Activated CD8-positive, alpha-beta memory T cell treated with anti-CD3 and anti-CD28 coated beads, Interleukin-2, amount 10 ng/mL, durations not matched to agents 7 days and 5 days (primary cell): ENCODE measurements at regions of chr1 and their contacts with region 1.

Region 1: GRCh38 chr1:145927063-145927886 is at the start of gene RBM8A:
- DNase-seq: peak; percentile 99
- ATAC-seq: peak; percentile 97
- H3K4me3 Mint-ChIP-seq: no peak within 1 kb of the TSS
- H3K27ac Mint-ChIP-seq: no peak within 1 kb of the TSS
- H3K4me1 Mint-ChIP-seq: peaks cover 22% of the 10 kb centered on the region
- H3K27me3 Mint-ChIP-seq: no peaks in the 10 kb centered on the region
- total RNA-seq, gene RBM8A: 189 to 249 TPM

Region 2: GRCh38 chr1:145858894-145859490 is 68.3 kb before region 1 on chr1 and contains the start of gene PIAS3:
- CTCF ChIA-PET with region 1: interaction called, 17 read pairs
- DNase-seq: peak; percentile 94
- ATAC-seq: peak; percentile 87
- H3K4me3 Mint-ChIP-seq: peak within 1 kb of the TSS; percentile 95
- H3K27ac Mint-ChIP-seq: peak within 1 kb of the TSS; percentile 87
- H3K4me1 Mint-ChIP-seq: peaks cover 10% of the 10 kb centered on the region
- H3K27me3 Mint-ChIP-seq: peaks cover 8% of the 10 kb centered on the region
- total RNA-seq, gene PIAS3: 20.3 to 23.6 TPM

Region 3: DNA sequence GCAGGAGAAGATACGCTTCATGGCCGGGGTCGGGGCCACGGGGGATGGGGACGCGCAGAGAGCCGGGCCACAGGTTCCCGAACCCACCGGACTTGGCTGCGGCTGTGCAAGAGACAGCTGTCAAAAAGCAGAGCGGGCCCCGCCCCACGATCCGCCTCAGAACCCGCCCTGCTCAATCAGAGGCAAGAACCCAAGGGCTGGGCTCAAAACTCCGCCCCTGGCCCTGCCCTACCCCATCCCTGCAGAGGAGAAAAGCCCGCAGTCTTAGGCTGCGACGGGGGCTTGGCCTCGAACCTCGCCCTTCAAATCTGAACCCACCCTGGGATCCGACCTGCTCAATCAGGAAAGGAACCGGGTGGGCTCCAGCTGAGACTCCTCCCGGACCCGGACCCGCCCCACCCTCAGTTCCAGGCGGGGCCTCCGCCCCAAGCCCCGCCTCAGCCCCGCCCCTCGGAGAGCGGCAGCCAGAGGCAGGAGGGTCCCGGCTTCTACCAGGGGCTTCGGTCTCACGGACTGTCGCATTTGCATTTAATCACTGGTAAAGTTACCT is 41.5 kb before region 1 on chr1 and contains the start of gene ANKRD35:
- CTCF ChIA-PET with region 1: no interaction called
- DNase-seq: peak; percentile 94
- ATAC-seq: peak; percentile 100
- H3K4me3 Mint-ChIP-seq: peak within 1 kb of the TSS; percentile 74
- H3K27ac Mint-ChIP-seq: peak within 1 kb of the TSS; percentile 19
- H3K4me1 Mint-ChIP-seq: peaks cover 16% of the 10 kb centered on the region
- H3K27me3 Mint-ChIP-seq: peaks cover 34% of the 10 kb centered on the region
- total RNA-seq, gene ANKRD35: 1.1 to 1.4 TPM

Region 4: DNA sequence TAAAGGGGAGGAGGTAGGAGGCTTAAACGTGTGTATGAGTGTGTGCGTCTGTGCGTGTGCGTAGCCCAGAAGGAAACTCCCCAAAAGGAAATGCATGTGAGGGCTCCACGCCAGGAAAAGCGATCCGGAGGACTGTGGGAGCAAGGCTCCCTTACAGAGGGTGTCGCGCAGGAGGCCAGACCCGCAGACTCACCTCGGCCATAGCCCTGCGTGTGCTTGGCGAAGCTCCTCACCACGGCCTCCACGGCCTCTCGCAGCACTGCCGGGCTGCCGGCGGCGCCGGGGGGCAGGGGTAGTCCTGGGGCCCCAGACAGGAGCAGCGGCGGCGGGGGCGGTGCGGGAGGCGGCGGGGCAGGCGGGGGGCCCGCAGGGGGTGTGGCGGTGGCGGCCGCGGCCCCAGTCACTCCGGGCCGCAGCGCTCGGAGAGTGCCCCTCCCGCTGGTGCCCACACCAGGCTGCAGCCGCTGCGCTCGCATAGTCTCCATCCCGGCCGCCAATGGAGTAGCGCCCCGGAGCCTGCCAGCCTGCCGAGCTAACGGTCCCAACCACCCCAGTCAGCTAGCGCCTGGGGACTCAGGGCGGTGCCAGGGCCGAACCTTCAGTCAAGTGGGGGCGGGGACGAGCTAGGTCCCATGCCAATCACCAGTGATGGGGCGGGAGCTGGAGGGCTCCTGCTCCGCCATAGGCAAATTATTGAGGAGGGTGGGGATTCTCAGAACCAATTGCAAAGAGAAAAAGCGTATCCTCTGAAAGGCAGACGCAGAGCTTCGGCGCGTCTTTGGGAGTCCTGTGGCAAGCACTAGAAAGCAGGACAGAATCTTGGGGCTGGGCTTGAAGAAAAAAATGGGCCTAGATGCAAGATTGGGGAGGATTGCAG is 30.4 kb after region 1 on chr1 and contains the start of gene LIX1L:
- CTCF ChIA-PET with region 1: interaction called, 30 read pairs
- DNase-seq: peak; percentile 98
- ATAC-seq: peak; percentile 90
- H3K4me3 Mint-ChIP-seq: peak within 1 kb of the TSS; percentile 91
- H3K27ac Mint-ChIP-seq: peak within 1 kb of the TSS; percentile 86
- H3K4me1 Mint-ChIP-seq: peaks cover 68% of the 10 kb centered on the region
- H3K27me3 Mint-ChIP-seq: no peaks in the 10 kb centered on the region
- total RNA-seq, gene LIX1L: 35.0 to 36.2 TPM

Region 5: DNA sequence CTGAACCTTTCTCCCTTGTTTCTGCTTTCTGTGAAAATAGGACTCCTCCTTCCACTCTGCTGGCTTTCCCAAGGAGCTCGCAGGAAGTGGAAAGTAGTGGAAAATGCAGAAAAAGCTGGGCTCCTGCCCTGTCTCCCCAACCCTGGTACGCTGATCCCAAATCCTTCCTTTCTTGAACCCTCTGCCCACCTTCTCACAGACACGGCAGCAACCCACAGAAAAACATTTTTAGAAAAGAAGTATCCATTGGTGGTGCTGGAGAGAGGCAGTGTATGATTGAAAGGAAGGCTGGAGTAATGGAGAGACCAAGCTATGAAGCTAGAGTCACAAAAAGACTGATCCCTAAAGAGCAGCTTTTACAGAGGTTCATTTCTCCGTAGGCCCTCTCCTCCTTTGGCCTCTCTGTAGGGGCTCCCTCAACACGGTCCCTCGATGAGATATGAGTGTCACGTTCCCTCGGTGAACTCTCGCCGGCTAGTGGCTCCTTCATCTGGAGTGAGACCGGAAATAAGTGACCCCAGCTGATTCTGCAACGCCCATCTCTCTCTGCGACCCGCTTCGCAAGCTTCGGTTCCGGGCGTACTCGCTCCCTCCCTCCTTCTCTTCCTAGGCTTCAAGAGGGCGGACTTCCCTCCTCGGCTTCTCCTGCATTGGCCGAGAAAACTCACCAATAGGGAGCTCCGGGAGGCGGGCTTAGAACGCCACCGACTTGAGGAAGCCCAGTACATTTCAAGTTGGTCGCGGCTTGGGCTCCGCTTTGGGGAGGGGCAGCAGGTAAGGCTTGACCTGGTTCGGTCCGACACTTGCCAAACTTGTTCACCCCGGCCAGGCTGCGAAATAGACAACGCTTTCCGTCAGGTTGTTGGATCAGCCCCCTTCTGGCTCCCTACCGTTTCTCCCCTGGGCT is 37.0 kb after region 1 on chr1 and contains the starts of genes ANKRD34A and POLR3GL:
- CTCF ChIA-PET with region 1: interaction called, 30 read pairs
- DNase-seq: peak; percentile 97
- ATAC-seq: peak; percentile 93
- H3K4me3 Mint-ChIP-seq: peak within 1 kb of the TSS; percentile 86
- H3K27ac Mint-ChIP-seq: peak within 1 kb of the TSS; percentile 91
- H3K4me1 Mint-ChIP-seq: peaks cover 52% of the 10 kb centered on the region
- H3K27me3 Mint-ChIP-seq: no peaks in the 10 kb centered on the region
- total RNA-seq, gene ANKRD34A: 3.8 to 4.6 TPM
- total RNA-seq, gene POLR3GL: 23.5 to 29.1 TPM